SK-N-SH (cell line): ENCODE measurements at regions of chr17 and their contacts with region 1.

Region 1: DNA sequence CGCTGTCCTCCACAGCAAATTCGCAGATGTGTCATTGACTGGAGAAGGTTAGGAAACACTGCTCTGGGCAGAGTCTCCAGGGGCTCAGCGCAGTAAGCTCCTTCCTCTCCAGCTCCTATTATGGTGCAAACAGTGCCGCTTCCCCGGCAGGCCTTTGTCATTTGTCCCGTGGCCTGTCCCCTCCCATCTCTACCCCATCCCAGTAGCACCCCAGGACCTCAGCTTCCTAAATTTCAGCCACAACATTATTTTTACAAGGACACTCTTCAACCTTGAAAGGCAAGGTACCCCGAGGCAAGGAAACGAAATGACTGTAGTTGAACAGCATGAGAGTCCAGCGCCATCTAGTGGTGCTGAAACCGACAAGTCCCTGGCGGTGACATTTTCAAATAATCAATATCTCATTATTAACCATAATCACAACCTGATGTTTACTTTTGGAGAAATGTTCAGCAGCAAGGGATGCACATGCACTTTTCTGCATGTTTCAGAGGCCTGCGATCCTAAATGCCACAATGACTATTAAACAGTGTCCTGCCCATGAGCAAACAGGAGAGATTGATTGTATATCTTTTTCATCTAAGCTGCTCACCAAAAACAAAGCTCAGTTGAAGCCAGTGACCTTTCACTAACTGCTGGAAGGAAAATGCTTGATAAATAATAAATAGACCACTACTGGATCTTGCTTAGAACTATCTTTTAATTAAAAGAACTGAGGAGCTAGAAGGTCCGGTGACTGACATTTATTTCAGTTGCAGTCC is 16.5 kb downstream of the MRPS23 start:
- DNase-seq: peak; percentile 77
- H3K4me3 ChIP-seq: peak overlapping the region in 1 of 2 experiments; percentile 21; a peak in 2 of 4 replicates
- H3K27ac ChIP-seq: peak overlapping the region in 1 of 2 experiments; percentile 81; a peak in 2 of 4 replicates
- H3K4me1 ChIP-seq: peaks cover 0 to 10% of the 10 kb centered on the region in 2 experiments; a peak in 1 of 4 replicates
- H3K27me3 ChIP-seq: no peaks in the 10 kb centered on the region
- CTCF ChIP-seq: peak; percentile 100
- EP300 ChIP-seq: 0 out of 4 replicates have a peak, but pooled peaks of 1 of the 2 experiments have one; percentile 20
- RAD21 ChIP-seq: peak; percentile 95

Region 2: DNA sequence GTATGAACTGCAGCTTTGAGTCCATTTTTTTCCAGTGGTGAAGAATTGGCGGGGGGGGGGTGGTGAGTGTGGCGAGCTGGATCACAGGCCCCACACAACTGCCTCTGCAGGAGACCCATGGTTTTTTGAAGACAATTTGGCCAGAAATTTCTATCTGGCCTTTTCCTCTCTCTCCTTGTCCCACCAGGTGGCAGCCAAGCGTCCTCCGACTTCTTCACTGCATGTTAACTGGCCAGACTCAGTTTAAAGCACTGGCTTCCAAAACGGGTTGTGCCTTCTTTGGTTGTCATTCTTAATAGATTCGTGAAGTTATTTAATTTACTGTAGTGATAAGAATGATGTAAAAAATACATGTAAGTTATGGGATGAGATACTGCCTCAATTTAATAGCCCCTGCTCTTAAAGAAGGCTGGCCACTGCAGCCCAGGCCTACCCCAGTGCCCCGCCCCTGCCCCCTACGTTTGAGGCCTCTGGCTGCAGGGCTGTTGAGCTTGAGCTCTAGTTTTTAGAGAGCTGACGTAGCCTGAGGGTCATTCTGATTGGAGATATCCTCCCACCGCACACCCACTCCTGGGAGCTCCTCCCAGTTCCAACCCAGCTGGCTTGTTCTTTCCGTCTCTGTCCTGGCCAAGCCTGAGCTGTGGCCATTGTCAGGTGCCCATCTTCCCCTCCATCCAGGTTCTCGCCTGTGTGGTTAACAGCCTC is 711.9 kb before region 1 on chr17:
- CTCF ChIA-PET with region 1: interaction called, 79 read pairs
- POLR2A ChIA-PET with region 1: interaction called, 3 read pairs
- DNase-seq: peak; percentile 80
- H3K4me3 ChIP-seq: no peak overlapping the region
- H3K27ac ChIP-seq: peak overlapping the region in 1 of 2 experiments; percentile 29; a peak in 1 of 4 replicates
- H3K4me1 ChIP-seq: peaks cover 0 to 17% of the 10 kb centered on the region in 2 experiments; a peak in 1 of 4 replicates
- H3K27me3 ChIP-seq: no peaks in the 10 kb centered on the region
- CTCF ChIP-seq: peak; percentile 73
- EP300 ChIP-seq: no peak
- RAD21 ChIP-seq: peak; percentile 76

Region 3: GRCh38 chr17:57541472-57542394 is 291.6 kb before region 1 on chr17:
- CTCF ChIA-PET with region 1: interaction called, 29 read pairs
- POLR2A ChIA-PET with region 1: no interaction called
- DNase-seq: peak; percentile 76
- H3K4me3 ChIP-seq: peak overlapping the region in 1 of 2 experiments; percentile 10; a peak in 1 of 4 replicates
- H3K27ac ChIP-seq: peak overlapping the region; percentile 65 to 100
- H3K4me1 ChIP-seq: peaks cover 52 to 98% of the 10 kb centered on the region in 2 experiments
- H3K27me3 ChIP-seq: no peaks in the 10 kb centered on the region
- CTCF ChIP-seq: no peak
- EP300 ChIP-seq: peak; percentile 71 to 97; a peak in 3 of 4 replicates
- RAD21 ChIP-seq: peak; percentile 54

Region 4: GRCh38 chr17:57604771-57605674 is 228.3 kb before region 1 on chr17:
- CTCF ChIA-PET with region 1: interaction called, 32 read pairs
- POLR2A ChIA-PET with region 1: no interaction called
- DNase-seq: peak; percentile 89
- H3K4me3 ChIP-seq: peak overlapping the region in 1 of 2 experiments; percentile 18; a peak in 1 of 4 replicates
- H3K27ac ChIP-seq: peak overlapping the region; percentile 59 to 99; a peak in 3 of 4 replicates
- H3K4me1 ChIP-seq: peaks cover 26 to 90% of the 10 kb centered on the region in 2 experiments
- H3K27me3 ChIP-seq: no peaks in the 10 kb centered on the region
- CTCF ChIP-seq: no peak; the same call in 1 of the 2 replicates
- EP300 ChIP-seq: peak in 1 of 2 experiments; percentile 51; a peak in 2 of 4 replicates
- RAD21 ChIP-seq: peak; percentile 56

Region 5: GRCh38 chr17:57747221-57748017 is 85.9 kb before region 1 on chr17:
- CTCF ChIA-PET with region 1: interaction called, 37 read pairs
- POLR2A ChIA-PET with region 1: no interaction called
- DNase-seq: peak; percentile 89
- H3K4me3 ChIP-seq: no peak overlapping the region
- H3K27ac ChIP-seq: peak overlapping the region in 1 of 2 experiments; percentile 85; a peak in 2 of 4 replicates
- H3K4me1 ChIP-seq: peaks cover 0 to 40% of the 10 kb centered on the region in 2 experiments; a peak in 2 of 4 replicates
- H3K27me3 ChIP-seq: peaks cover 18% of the 10 kb centered on the region; the same call in 1 of the 2 replicates
- CTCF ChIP-seq: peak; percentile 99
- EP300 ChIP-seq: peak in 1 of 2 experiments; percentile 64; a peak in 1 of 4 replicates
- RAD21 ChIP-seq: peak; percentile 100

Region 6: DNA sequence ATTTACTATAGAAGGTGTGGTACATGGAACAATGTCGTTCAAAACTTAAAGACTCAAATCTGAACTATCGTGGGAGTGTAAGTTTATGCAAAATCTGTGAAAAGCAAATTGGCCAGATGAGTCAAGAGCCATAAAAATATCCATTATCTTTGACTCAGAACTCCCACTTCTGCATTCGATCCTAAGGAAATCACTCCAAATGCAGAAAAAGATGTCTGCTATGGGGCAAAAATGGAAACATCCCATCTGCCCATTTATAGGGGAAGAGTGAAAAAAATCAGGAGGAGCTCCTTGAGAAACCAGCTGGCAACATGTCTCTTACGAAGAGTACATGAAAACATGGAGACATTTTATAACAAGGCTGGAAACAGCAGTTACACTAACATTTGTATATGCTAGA is 44.6 kb before region 1 on chr17:
- CTCF ChIA-PET with region 1: interaction called, 119 read pairs
- POLR2A ChIA-PET with region 1: interaction called, 13 read pairs
- DNase-seq: no peak
- H3K4me3 ChIP-seq: no peak overlapping the region
- H3K27ac ChIP-seq: no peak overlapping the region
- H3K4me1 ChIP-seq: peaks cover 0 to 12% of the 10 kb centered on the region in 2 experiments; a peak in 1 of 4 replicates
- H3K27me3 ChIP-seq: peaks cover 41% of the 10 kb centered on the region
- CTCF ChIP-seq: no peak
- EP300 ChIP-seq: no peak
- RAD21 ChIP-seq: no peak

Region 7: GRCh38 chr17:57861000-57861789 is 27.8 kb after region 1 on chr17:
- CTCF ChIA-PET with region 1: interaction called, 11 read pairs
- POLR2A ChIA-PET with region 1: no interaction called
- DNase-seq: peak; percentile 70
- H3K4me3 ChIP-seq: peak overlapping the region in 1 of 2 experiments; percentile 28; a peak in 1 of 4 replicates
- H3K27ac ChIP-seq: no peak overlapping the region; a peak in 1 of 4 replicates
- H3K4me1 ChIP-seq: peaks cover 14 to 22% of the 10 kb centered on the region in 2 experiments; a peak in 3 of 4 replicates
- H3K27me3 ChIP-seq: no peaks in the 10 kb centered on the region
- CTCF ChIP-seq: no peak
- EP300 ChIP-seq: no peak
- RAD21 ChIP-seq: no peak